ENCODE measurements at regions of chr4 and their contacts with region 1.

Region 1: GRCh38 chr4:44777115-44777514 is 50.8 kb upstream of the GNPDA2 start:
- DNase-seq: no peak
- H3K4me3 ChIP-seq: no peak overlapping the region
- H3K27ac ChIP-seq: no peak overlapping the region
- H3K4me1 ChIP-seq: no peaks in the 10 kb centered on the region
- H3K27me3 ChIP-seq: no peaks in the 10 kb centered on the region
- CTCF ChIP-seq: no peak
- EP300 ChIP-seq: no peak
- RAD21 ChIP-seq: no peak

Region 2: DNA sequence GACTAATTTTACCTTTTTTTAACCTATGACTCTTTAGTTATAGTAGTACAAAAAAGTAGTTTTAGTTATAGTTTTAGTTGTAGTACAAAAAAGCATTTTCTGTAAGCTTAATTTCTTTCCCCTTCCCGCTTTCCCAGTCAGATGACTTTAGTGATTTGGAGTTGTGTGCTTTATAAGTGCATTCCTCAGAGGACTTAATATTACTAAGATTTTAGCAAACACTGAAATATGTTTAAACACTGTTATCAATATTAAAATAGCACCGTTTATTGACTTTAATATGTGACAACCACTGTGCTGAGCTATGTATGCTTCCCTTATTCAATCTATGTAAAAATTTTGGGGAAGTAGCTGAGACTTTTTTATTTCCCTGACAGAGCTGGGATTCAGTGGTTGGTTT is 76.1 kb before region 1 on chr4:
- CTCF ChIA-PET with region 1: no interaction called
- POLR2A ChIA-PET with region 1: no interaction called
- DNase-seq: no peak
- H3K4me3 ChIP-seq: no peak overlapping the region
- H3K27ac ChIP-seq: no peak overlapping the region
- H3K4me1 ChIP-seq: peaks cover 0 to 3% of the 10 kb centered on the region in 2 experiments; a peak in 2 of 4 replicates
- H3K27me3 ChIP-seq: no peaks in the 10 kb centered on the region
- CTCF ChIP-seq: no peak
- EP300 ChIP-seq: no peak
- RAD21 ChIP-seq: no peak

Region 3: DNA sequence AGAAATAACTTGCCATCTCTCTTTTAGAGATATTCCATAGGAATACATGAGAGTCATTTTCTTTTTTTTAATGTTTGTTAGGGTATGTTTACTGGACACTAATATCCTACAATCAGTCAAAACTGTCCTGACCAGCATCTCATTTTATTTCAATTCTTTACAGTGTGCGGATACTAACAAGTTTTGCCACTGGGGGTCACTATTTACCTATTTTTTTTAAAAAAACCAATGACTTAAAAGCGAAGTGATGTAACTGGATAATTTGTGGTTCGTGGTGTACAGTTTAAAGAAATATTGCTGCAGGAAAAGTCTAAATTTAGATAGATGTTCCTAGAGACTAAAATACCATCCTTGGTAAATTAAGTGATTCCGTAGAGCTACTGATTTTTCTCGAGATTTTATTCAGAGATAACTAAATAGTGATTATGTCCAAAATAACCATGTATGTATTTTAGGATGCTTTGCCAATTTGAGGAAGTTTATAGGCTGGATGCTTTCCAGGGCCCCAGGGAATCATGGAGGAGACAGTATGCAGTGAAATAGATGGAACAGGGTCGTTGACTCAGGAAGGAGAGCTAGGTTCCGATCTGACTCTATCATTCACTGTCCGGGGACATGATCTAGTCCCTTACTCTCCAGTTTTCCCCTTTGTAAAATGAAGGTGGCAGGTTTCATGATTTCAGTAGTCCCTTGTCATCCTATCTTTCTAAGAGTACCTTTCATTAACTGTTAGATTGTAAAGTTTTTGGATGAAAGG is 16.8 kb before region 1 on chr4:
- CTCF ChIA-PET with region 1: interaction called, 11 read pairs
- POLR2A ChIA-PET with region 1: no interaction called
- DNase-seq: peak; percentile 15
- H3K4me3 ChIP-seq: no peak overlapping the region; a peak in 1 of 4 replicates
- H3K27ac ChIP-seq: no peak overlapping the region
- H3K4me1 ChIP-seq: no peaks in the 10 kb centered on the region
- H3K27me3 ChIP-seq: no peaks in the 10 kb centered on the region
- CTCF ChIP-seq: peak; percentile 71
- EP300 ChIP-seq: no peak
- RAD21 ChIP-seq: peak; percentile 68

Measured in SK-N-SH (cell line).